ENCODE measurements at regions of chr17 and their contacts with region 1.

Region 1: GRCh38 chr17:44331249-44331760 is 6.7 kb upstream of the SLC25A39 start:
- DNase-seq: peak; percentile 74
- H3K4me3 Mint-ChIP-seq: no peak overlapping the region
- H3K27ac Mint-ChIP-seq: peak overlapping the region; percentile 32
- H3K4me1 Mint-ChIP-seq: peaks cover 16% of the 10 kb centered on the region
- H3K27me3 Mint-ChIP-seq: peaks cover 2% of the 10 kb centered on the region

Region 2: DNA sequence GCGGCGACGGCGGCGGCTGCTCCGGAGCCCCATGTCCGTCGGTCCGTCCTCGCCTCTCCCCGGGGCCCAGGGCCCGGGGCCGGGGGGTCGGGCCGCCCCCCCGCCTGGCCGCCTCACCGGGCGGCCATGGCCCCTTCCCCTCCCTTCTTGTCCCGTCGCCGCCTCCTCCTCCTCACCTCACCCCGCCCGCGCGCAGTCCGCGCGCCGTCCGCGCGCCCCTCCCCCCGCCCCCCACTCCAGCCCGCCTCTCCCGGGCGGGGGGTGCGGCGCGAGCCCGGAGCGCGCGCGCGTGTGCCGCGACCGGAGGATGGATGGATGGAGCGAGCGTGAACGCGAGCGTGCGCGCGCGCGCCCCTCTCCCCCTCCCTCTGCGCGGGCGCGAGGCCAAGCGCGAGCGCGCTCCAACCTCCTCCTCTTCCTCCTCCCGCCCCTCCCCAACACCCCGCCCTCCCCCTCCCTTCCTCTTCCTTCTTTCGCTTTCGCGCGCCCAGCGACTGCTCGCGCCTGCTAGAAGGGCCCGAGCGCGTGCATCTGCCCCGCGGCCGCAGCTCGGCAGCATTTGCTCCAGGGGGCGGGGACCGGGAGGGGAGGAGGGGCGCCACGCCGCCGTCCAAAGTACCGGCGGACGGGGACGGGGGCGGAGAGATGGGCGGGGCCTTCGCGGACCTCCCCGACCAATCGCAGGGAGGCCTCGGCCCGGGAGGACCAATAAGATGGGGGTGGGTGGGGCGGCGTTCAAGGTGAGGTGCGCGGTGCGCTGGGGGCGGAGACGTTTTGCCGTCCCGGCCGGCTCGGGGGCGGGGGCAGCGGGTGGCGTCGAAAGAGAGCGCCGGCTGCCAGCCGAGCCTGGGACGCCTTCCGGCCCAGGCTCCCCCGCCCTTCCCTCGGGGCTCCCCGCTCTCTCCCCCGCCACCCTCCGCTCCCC is 131.5 kb before region 1 on chr17 and contains the start of gene ATXN7L3:
- CTCF ChIA-PET with region 1: interaction called, 11 read pairs
- POLR2A ChIA-PET with region 1: interaction called, 9 read pairs
- DNase-seq: peak; percentile 100
- H3K4me3 Mint-ChIP-seq: peak within 1 kb of the TSS; percentile 90
- H3K27ac Mint-ChIP-seq: peak within 1 kb of the TSS; percentile 95
- H3K4me1 Mint-ChIP-seq: peaks cover 59% of the 10 kb centered on the region
- H3K27me3 Mint-ChIP-seq: no peaks in the 10 kb centered on the region
- total RNA-seq, gene ATXN7L3: 106 to 107 TPM

Region 3: DNA sequence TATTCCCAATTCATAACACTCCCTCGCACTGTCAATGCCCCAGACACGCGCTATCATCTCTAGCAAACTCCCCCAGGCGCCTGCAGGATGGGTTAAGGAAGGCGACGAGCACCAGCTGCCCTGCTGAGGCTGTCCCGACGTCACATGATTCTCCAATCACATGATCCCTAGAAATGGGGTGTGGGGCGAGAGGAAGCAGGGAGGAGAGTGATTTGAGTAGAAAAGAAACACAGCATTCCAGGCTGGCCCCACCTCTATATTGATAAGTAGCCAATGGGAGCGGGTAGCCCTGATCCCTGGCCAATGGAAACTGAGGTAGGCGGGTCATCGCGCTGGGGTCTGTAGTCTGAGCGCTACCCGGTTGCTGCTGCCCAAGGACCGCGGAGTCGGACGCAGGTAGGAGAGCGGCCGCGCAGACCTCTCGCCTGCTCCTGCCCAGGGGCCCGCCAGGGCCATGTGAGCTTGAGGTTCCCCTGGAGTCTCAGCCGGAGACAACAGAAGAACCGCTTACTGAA is 13.7 kb after region 1 on chr17 and contains the start of gene GRN:
- CTCF ChIA-PET with region 1: interaction called, 18 read pairs
- POLR2A ChIA-PET with region 1: interaction called, 6 read pairs
- DNase-seq: peak; percentile 89
- H3K4me3 Mint-ChIP-seq: peak within 1 kb of the TSS; percentile 84
- H3K27ac Mint-ChIP-seq: peak within 1 kb of the TSS; percentile 44
- H3K4me1 Mint-ChIP-seq: peaks cover 30% of the 10 kb centered on the region
- H3K27me3 Mint-ChIP-seq: peaks cover 12% of the 10 kb centered on the region
- total RNA-seq, gene GRN: 87.8 to 98.4 TPM

Region 4: DNA sequence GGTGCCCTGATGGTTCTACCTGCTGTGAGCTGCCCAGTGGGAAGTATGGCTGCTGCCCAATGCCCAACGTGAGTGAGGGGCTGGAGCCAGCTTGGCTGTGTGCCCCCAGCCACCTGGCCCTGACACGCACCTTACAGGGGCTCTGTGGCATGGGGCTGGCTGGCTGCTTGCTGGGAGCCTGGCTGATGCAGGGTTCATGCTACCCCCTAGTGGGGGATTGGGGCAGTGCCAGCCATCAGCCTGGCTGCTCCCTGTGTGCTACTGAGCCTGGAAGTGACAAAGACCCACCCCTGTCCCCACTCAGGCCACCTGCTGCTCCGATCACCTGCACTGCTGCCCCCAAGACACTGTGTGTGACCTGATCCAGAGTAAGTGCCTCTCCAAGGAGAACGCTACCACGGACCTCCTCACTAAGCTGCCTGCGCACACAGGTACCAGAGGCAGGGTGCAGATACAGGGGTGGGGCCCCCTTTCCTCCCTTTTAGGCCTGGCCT is 19.5 kb after region 1 on chr17:
- CTCF ChIA-PET with region 1: interaction called, 18 read pairs
- POLR2A ChIA-PET with region 1: interaction called, 6 read pairs
- DNase-seq: peak; percentile 75
- H3K4me3 Mint-ChIP-seq: no peak overlapping the region
- H3K27ac Mint-ChIP-seq: no peak overlapping the region
- H3K4me1 Mint-ChIP-seq: peaks cover 23% of the 10 kb centered on the region
- H3K27me3 Mint-ChIP-seq: peaks cover 10% of the 10 kb centered on the region

Measured in activated CD4-positive, alpha-beta memory T cell treated with anti-CD3 and anti-CD28 coated beads, Interleukin-2, amount 10 ng/mL, durations not matched to agents 7 days and 5 days (primary cell).